Panc1 (cell line): ENCODE measurements at regions of chr6 and their contacts with region 1.

Region 1: GRCh38 chr6:97732045-97732444 is 449.0 kb upstream of the MMS22L start:
- DNase-seq: no peak
- ATAC-seq: no peak
- H3K4me3 ChIP-seq: no peak overlapping the region
- H3K27ac ChIP-seq: no peak overlapping the region
- H3K4me1 ChIP-seq: no peaks in the 10 kb centered on the region
- H3K27me3 ChIP-seq: no peaks in the 10 kb centered on the region
- CTCF ChIP-seq: no peak

Region 2: DNA sequence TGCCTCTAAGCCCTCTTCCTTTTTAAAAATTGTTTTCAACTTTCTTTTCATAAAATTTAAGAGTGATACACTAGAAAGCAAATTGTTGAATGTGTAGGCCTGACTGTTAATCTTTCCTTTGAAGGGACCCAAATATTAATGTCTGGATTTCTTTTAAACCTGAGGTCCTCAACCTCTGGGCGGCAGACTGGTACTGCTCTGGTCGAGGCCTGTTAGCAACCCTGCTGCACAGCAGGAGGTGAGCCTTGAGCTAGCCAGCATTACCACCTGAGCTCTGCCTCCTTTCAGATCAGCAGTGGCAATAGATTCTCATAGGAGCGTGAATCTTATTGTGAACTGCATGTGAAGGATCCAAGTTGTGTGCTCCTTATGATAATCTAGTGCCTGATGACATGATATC is 1963.5 kb before region 1 on chr6:
- CTCF ChIA-PET with region 1: no interaction called
- POLR2A ChIA-PET with region 1: no interaction called
- in situ Hi-C with region 1: no loop called
- intact Hi-C with region 1: loop called (anchors 10 kb)
- DNase-seq: no peak
- ATAC-seq: no peak
- H3K4me3 ChIP-seq: no peak overlapping the region
- H3K27ac ChIP-seq: no peak overlapping the region
- H3K4me1 ChIP-seq: no peaks in the 10 kb centered on the region
- H3K27me3 ChIP-seq: no peaks in the 10 kb centered on the region
- CTCF ChIP-seq: no peak